ENCODE measurements at regions of chr9 and their contacts with region 1.

Region 1: GRCh38 chr9:6055213-6055612 is 39.8 kb upstream of the RANBP6 start:
- DNase-seq: no peak
- H3K4me3 Mint-ChIP-seq: no peak overlapping the region
- H3K27ac Mint-ChIP-seq: no peak overlapping the region
- H3K4me1 Mint-ChIP-seq: peaks cover under 1% of the 10 kb centered on the region
- H3K27me3 Mint-ChIP-seq: no peaks in the 10 kb centered on the region

Region 2: GRCh38 chr9:5536684-5537083 is 518.5 kb before region 1 on chr9:
- CTCF ChIA-PET with region 1: no interaction called
- POLR2A ChIA-PET with region 1: no interaction called
- intact Hi-C with region 1: no loop called
- DNase-seq: no peak
- H3K4me3 Mint-ChIP-seq: no peak overlapping the region
- H3K27ac Mint-ChIP-seq: no peak overlapping the region
- H3K4me1 Mint-ChIP-seq: peaks cover 30% of the 10 kb centered on the region
- H3K27me3 Mint-ChIP-seq: no peaks in the 10 kb centered on the region

Region 3: DNA sequence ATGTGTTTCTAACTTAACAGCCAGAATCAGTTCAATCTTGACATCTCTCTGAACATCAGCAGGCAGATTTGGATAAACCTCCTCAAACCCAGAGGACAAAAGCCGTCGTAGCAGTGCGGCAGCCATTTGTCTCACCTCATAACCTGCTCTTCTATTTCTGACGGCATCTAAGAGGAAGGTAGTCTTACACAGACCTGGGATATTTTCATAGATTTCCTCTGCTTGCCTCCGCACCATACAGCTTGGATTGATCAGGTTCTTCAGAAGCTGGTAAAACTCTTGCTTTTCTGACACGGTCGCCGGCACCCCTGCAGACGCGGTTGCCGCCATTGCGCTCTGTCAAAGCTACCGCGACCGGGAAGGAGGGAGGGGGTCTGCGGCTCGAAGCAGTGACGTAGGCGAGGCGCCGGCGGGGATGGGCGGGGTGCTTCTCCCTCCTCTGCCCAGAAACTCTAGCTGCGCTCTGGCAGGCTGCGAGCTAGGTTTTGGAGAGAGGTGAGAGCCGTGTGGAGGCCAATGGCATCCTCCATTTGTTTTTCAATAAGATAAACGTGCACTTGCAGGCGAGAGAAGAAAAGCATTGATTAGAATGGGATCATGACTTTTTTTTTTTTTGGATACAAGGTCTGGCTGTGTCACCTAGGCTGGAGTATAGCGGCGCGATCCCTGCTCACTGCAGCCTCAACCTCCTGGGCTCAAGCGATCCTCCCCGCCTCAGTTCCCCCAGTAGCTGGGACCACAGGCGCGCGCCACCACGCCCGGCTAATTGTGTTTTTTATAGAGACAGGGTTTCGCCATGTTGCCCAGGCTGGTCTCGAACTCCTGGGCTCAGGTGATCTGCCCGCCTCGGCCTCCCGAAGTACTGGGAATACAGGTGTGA is 39.7 kb before region 1 on chr9 and contains the start of gene RANBP6:
- CTCF ChIA-PET with region 1: interaction called, 11 read pairs
- POLR2A ChIA-PET with region 1: no interaction called
- intact Hi-C with region 1: loop called (anchors 2 kb)
- DNase-seq: peak; percentile 96
- H3K4me3 Mint-ChIP-seq: peak within 1 kb of the TSS; percentile 96
- H3K27ac Mint-ChIP-seq: peak within 1 kb of the TSS; percentile 98
- H3K4me1 Mint-ChIP-seq: peaks cover 46% of the 10 kb centered on the region
- H3K27me3 Mint-ChIP-seq: no peaks in the 10 kb centered on the region
- total RNA-seq, gene RANBP6: 20.0 to 20.7 TPM

Region 4: GRCh38 chr9:6029604-6030274 is 25.5 kb before region 1 on chr9:
- CTCF ChIA-PET with region 1: interaction called, 13 read pairs
- POLR2A ChIA-PET with region 1: no interaction called
- intact Hi-C with region 1: no loop called
- DNase-seq: no peak
- H3K4me3 Mint-ChIP-seq: no peak overlapping the region
- H3K27ac Mint-ChIP-seq: no peak overlapping the region
- H3K4me1 Mint-ChIP-seq: no peaks in the 10 kb centered on the region
- H3K27me3 Mint-ChIP-seq: peaks cover 8% of the 10 kb centered on the region

Region 5: GRCh38 chr9:6305954-6306563 is 250.8 kb after region 1 on chr9:
- CTCF ChIA-PET with region 1: interaction called, 72 read pairs
- POLR2A ChIA-PET with region 1: no interaction called
- intact Hi-C with region 1: loop called (anchors 1 kb)
- DNase-seq: no peak
- H3K4me3 Mint-ChIP-seq: no peak overlapping the region
- H3K27ac Mint-ChIP-seq: no peak overlapping the region
- H3K4me1 Mint-ChIP-seq: no peaks in the 10 kb centered on the region
- H3K27me3 Mint-ChIP-seq: no peaks in the 10 kb centered on the region